ENCODE measurements at regions of chr13 and their contacts with region 1.

Region 1: GRCh38 chr13:113208424-113209335 is at the start of gene PCID2:
- DNase-seq: peak; percentile 93
- ATAC-seq: peak; percentile 77
- H3K4me3 Mint-ChIP-seq: peak within 1 kb of the TSS; percentile 90
- H3K27ac Mint-ChIP-seq: peak within 1 kb of the TSS; percentile 90
- H3K4me1 Mint-ChIP-seq: peaks cover 58% of the 10 kb centered on the region
- H3K27me3 Mint-ChIP-seq: no peaks in the 10 kb centered on the region
- total RNA-seq, gene PCID2: 66.7 to 72.8 TPM

Region 2: DNA sequence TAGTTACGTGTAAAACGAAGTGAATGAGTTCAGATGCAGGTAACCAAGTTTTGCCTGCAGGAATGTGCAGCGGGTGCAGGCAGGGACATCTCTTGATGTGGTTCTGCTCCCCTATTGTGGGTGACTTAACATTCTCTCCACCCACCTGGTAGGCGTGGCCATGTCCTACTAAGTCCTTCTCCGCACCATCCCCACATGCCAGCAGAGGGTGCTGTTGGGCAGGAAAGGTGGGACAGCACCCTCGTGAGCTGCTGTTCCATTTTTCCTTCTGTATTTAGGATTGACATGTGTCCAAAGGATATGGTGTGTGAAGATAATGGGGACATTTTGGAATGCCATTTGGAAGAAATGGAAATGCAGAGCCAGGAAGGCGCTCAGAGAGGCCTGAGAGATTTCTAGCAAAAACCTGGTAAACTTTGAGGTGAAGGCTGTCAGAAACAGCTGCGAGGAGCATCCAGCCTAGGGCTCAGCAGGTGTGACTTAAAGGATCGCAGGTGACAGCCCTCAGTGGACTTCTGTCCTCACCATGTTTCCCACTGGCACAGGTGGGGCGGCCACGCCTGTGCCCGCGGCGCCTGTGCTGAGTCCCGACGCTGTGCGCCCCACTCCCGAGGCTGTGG is 265.9 kb before region 1 on chr13:
- CTCF ChIA-PET with region 1: interaction called, 4 read pairs
- POLR2A ChIA-PET with region 1: no interaction called
- intact Hi-C with region 1: loop called in 1 of 2 experiments (anchors 2 kb)
- DNase-seq: peak; percentile 98
- ATAC-seq: peak; percentile 98
- H3K4me3 Mint-ChIP-seq: peak overlapping the region; percentile 73
- H3K27ac Mint-ChIP-seq: peak overlapping the region; percentile 28
- H3K4me1 Mint-ChIP-seq: peaks cover 7% of the 10 kb centered on the region
- H3K27me3 Mint-ChIP-seq: peaks cover 18% of the 10 kb centered on the region

Region 3: DNA sequence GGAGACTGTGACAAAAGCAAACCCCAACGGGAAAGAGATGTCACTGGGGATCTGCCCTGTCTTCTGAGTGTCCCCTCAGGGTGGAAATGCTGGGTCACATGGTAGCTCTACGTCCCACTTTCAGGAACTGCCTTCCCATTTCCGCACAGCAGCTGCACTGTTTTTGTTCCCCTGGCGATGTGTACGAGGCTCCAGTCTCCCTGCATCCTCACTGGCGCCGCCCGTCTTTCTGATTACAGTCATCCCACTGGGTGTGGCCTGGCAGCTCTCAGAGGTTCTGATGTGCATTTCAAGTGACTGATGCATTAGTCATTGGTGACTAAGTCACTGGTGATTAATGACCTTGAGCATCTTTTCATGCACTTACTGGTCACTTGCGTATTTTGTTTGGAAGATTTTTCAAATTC is 21.4 kb before region 1 on chr13:
- CTCF ChIA-PET with region 1: interaction called, 3 read pairs
- POLR2A ChIA-PET with region 1: no interaction called
- intact Hi-C with region 1: loop called in 1 of 2 experiments (anchors 1 kb)
- DNase-seq: peak; percentile 85
- ATAC-seq: peak; percentile 94
- H3K4me3 Mint-ChIP-seq: no peak overlapping the region
- H3K27ac Mint-ChIP-seq: peak overlapping the region; percentile 71
- H3K4me1 Mint-ChIP-seq: peaks cover 38% of the 10 kb centered on the region
- H3K27me3 Mint-ChIP-seq: no peaks in the 10 kb centered on the region

Region 4: DNA sequence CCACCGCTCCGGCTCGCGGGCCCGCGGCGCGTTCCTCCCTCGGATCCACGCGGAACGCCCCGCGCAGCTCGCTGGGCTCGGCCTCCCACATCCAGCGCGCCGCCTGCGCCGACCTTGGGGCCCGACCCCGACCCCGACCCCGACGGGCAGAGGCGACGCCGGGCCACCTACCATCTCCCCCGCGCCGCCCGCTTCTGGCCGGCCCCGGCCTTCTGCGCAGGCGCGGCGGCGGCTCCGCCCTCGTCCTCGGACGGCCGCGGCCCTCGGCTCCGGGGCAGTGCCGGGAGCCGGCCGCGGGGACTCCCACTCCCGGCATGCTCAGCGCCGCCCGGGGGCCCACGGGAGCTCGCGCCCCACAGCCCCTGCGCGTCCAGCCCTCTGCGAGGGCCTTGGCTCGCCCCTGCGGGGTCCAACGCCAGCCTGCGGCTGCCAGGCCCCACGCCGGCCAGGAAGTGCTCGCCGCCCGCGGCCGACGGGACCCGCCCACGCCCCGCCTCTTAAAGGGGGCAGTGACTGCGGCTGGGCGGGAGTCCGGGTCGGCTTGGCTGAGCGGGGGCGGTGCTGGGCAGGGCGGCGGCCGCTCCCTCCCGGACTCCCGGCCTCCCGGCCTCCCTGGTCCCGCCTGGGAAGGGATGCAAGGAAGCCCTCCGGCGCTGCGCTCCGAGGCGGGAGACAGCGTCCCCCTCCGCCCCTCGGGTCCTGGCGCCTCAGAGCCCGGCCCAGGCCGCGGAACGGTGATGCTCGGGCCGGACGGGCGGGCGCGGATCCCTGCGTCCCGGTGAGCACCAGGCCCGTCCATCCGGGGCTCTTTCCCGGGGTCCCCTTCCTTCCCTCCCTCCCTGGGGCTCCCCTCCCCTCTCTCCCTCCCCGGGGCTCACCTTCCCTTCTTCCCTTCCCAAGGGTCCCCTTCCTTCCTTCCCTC is 282.1 kb after region 1 on chr13 and contains the start of gene DCUN1D2:
- CTCF ChIA-PET with region 1: no interaction called
- POLR2A ChIA-PET with region 1: no interaction called
- intact Hi-C with region 1: loop called (anchors 1 to 5 kb)
- DNase-seq: peak; percentile 83
- ATAC-seq: peak; percentile 72
- H3K4me3 Mint-ChIP-seq: peak within 1 kb of the TSS; percentile 85
- H3K27ac Mint-ChIP-seq: peak within 1 kb of the TSS; percentile 86
- H3K4me1 Mint-ChIP-seq: peaks cover 64% of the 10 kb centered on the region
- H3K27me3 Mint-ChIP-seq: no peaks in the 10 kb centered on the region
- total RNA-seq, gene DCUN1D2: 12.1 to 15.3 TPM

Region 5: GRCh38 chr13:114132419-114133121 is 923.9 kb after region 1 on chr13 and contains the start of gene RASA3:
- CTCF ChIA-PET with region 1: no interaction called
- POLR2A ChIA-PET with region 1: no interaction called
- intact Hi-C with region 1: loop called in 1 of 2 experiments (anchors 5 kb)
- DNase-seq: peak; percentile 74
- ATAC-seq: peak; percentile 35
- H3K4me3 Mint-ChIP-seq: peak within 1 kb of the TSS; percentile 100
- H3K27ac Mint-ChIP-seq: peak within 1 kb of the TSS; percentile 95
- H3K4me1 Mint-ChIP-seq: peaks cover 39% of the 10 kb centered on the region
- H3K27me3 Mint-ChIP-seq: no peaks in the 10 kb centered on the region
- total RNA-seq, gene RASA3: 33.0 to 34.7 TPM

Measured in activated CD4-positive, alpha-beta T cell treated with anti-CD3 and anti-CD28 coated beads for 36 hours (primary cell).